Activated B cell treated with CpG ODN at 0.5 μM for 24 hours (primary cell): ENCODE measurements at regions of chr9 and their contacts with region 1.

Region 1: GRCh38 chr9:72539824-72540347 is 18.5 kb downstream of the TMC1 start:
- DNase-seq: no peak
- ATAC-seq: no peak
- H3K4me3 Mint-ChIP-seq: no peak overlapping the region
- H3K27ac Mint-ChIP-seq: no peak overlapping the region
- H3K4me1 Mint-ChIP-seq: no peaks in the 10 kb centered on the region
- H3K27me3 Mint-ChIP-seq: peaks cover 2% of the 10 kb centered on the region
- CTCF ChIP-seq: no peak

Region 2: DNA sequence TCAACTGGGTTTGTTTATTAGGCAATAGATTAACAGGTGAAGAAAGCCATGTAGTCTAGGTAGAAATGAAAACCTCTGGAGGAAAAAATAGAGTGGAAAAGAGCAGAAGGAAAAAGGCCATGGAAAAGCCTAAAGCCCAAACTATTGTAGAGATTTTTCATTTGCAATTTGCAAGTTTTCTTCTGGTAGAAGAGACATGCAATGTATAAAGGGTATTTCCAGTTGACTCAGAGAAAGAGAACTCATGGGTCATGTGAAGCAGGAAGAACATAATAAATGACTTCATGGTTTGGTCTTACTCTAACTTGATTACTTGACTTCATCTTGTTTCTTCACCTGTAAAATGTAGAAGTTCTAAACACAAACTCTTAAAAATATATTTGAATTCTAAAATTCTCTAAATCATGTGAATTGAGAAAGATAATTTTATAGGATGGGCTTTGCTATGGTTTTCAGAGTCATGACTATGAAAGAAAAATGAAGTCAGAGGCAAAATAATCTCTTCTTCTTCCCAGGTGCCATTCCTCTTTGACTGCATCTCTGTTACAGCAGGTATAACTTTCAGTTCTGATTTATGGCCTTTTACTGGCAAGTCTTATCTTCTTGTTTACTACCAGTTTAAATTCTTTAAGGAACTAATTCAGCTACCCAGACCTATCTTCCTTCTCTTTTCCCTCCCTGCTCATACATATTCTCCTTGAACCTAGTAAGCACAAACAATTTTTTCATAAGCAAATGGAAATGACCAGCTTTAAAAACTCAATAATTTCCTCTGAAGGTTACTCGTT is 66.2 kb before region 1 on chr9:
- CTCF ChIA-PET with region 1: no interaction called
- POLR2A ChIA-PET with region 1: no interaction called
- intact Hi-C with region 1: loop called (anchors 10 kb)
- DNase-seq: no peak
- ATAC-seq: peak; percentile 78
- H3K4me3 Mint-ChIP-seq: no peak overlapping the region
- H3K27ac Mint-ChIP-seq: peak overlapping the region; percentile 75
- H3K4me1 Mint-ChIP-seq: peaks cover 12% of the 10 kb centered on the region
- H3K27me3 Mint-ChIP-seq: no peaks in the 10 kb centered on the region
- CTCF ChIP-seq: no peak

Region 3: GRCh38 chr9:72509635-72510034 is 30.3 kb before region 1 on chr9:
- CTCF ChIA-PET with region 1: no interaction called
- POLR2A ChIA-PET with region 1: no interaction called
- intact Hi-C with region 1: no loop called
- DNase-seq: no peak
- ATAC-seq: no peak
- H3K4me3 Mint-ChIP-seq: no peak overlapping the region
- H3K27ac Mint-ChIP-seq: no peak overlapping the region
- H3K4me1 Mint-ChIP-seq: no peaks in the 10 kb centered on the region
- H3K27me3 Mint-ChIP-seq: no peaks in the 10 kb centered on the region
- CTCF ChIP-seq: no peak

Region 4: GRCh38 chr9:72586388-72587130 is 46.7 kb after region 1 on chr9:
- CTCF ChIA-PET with region 1: no interaction called
- POLR2A ChIA-PET with region 1: no interaction called
- intact Hi-C with region 1: no loop called
- DNase-seq: no peak
- ATAC-seq: peak; percentile 37
- H3K4me3 Mint-ChIP-seq: no peak overlapping the region
- H3K27ac Mint-ChIP-seq: no peak overlapping the region
- H3K4me1 Mint-ChIP-seq: no peaks in the 10 kb centered on the region
- H3K27me3 Mint-ChIP-seq: peaks cover 5% of the 10 kb centered on the region
- CTCF ChIP-seq: no peak

Region 5: GRCh38 chr9:73143606-73144328 is 603.9 kb after region 1 on chr9:
- CTCF ChIA-PET with region 1: no interaction called
- POLR2A ChIA-PET with region 1: no interaction called
- intact Hi-C with region 1: no loop called
- DNase-seq: no peak
- ATAC-seq: no peak
- H3K4me3 Mint-ChIP-seq: no peak overlapping the region
- H3K27ac Mint-ChIP-seq: no peak overlapping the region
- H3K4me1 Mint-ChIP-seq: peaks cover 12% of the 10 kb centered on the region
- H3K27me3 Mint-ChIP-seq: no peaks in the 10 kb centered on the region
- CTCF ChIP-seq: no peak